MCF 10A (cell line): ENCODE measurements at regions of chr14 and their contacts with region 1.

Region 1: GRCh38 chr14:49946320-49947141 is 53.6 kb downstream of the ARF6 start:
- DNase-seq: peak; percentile 72
- H3K4me3 Mint-ChIP-seq: peak overlapping the region; percentile 42
- H3K27ac Mint-ChIP-seq: peak overlapping the region; percentile 81
- H3K4me1 Mint-ChIP-seq: peaks cover 38% of the 10 kb centered on the region
- H3K27me3 Mint-ChIP-seq: no peaks in the 10 kb centered on the region
- CTCF ChIP-seq: no peak

Region 2: GRCh38 chr14:49959822-49960408 is 13.4 kb after region 1 on chr14:
- CTCF ChIA-PET with region 1: interaction called, 5 read pairs
- POLR2A ChIA-PET with region 1: interaction called, 98 read pairs
- intact Hi-C with region 1: no loop called
- DNase-seq: no peak
- H3K4me3 Mint-ChIP-seq: no peak overlapping the region
- H3K27ac Mint-ChIP-seq: no peak overlapping the region
- H3K4me1 Mint-ChIP-seq: peaks cover 31% of the 10 kb centered on the region
- H3K27me3 Mint-ChIP-seq: no peaks in the 10 kb centered on the region
- CTCF ChIP-seq: no peak

Region 3: DNA sequence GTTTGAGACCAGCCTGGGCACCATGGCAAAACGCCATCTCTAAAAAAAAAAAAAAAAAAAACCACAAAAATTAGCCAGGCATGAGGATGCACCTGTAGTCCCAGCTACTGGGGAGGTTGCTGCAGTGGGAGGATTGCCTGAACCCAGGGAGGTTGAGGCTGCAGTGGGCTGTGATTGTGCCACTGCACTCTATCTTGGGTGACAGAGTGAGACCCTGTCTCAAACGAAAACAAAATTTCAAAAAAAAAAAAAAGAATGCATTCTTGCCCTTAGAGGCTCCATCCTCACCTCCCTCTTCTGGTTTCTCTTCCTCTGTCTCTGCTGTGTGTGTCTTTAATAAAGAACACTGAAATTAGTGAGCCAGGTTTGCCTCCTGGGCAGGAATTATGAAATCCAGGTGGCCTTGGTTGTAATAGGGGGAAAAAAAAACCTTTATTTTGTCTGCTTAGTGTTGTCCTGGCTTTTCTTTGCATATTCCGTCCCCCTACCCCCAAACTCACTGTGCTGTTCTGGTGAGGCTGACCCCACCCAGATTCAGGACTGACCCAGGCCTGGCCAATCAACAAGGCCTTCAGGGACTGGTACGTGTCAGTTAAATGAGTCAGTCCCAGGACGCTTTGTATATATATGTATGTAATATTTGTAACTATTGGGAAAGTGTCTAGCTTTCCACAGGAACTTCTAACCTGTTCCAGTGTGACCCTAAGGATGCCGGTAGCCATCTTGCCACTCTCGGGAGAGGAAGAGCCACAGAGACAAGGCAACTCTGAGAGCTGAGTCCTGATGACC is 62.2 kb after region 1 on chr14:
- CTCF ChIA-PET with region 1: interaction called, 11 read pairs
- POLR2A ChIA-PET with region 1: interaction called, 222 read pairs
- intact Hi-C with region 1: no loop called
- DNase-seq: peak; percentile 96
- H3K4me3 Mint-ChIP-seq: peak overlapping the region; percentile 69
- H3K27ac Mint-ChIP-seq: peak overlapping the region; percentile 96
- H3K4me1 Mint-ChIP-seq: peaks cover 29% of the 10 kb centered on the region
- H3K27me3 Mint-ChIP-seq: no peaks in the 10 kb centered on the region
- CTCF ChIP-seq: no peak

Region 4: GRCh38 chr14:50082784-50083466 is 136.4 kb after region 1 on chr14:
- CTCF ChIA-PET with region 1: interaction called, 3 read pairs
- POLR2A ChIA-PET with region 1: interaction called, 10 read pairs
- intact Hi-C with region 1: no loop called
- DNase-seq: no peak
- H3K4me3 Mint-ChIP-seq: no peak overlapping the region
- H3K27ac Mint-ChIP-seq: no peak overlapping the region
- H3K4me1 Mint-ChIP-seq: peaks cover 26% of the 10 kb centered on the region
- H3K27me3 Mint-ChIP-seq: no peaks in the 10 kb centered on the region
- CTCF ChIP-seq: no peak